ENCODE measurements at regions of chr2 and their contacts with region 1.

Region 1: GRCh38 chr2:210654091-210654490 is 97.7 kb downstream of the CPS1 start:
- DNase-seq: no peak

Region 2: GRCh38 chr2:209340522-209340921 is 1313.6 kb before region 1 on chr2:
- intact Hi-C with region 1: no loop called
- DNase-seq: no peak

Region 3: GRCh38 chr2:210577263-210578071 is 76.6 kb before region 1 on chr2:
- intact Hi-C with region 1: loop called in 1 of 2 experiments (anchors 2 kb)
- DNase-seq: no peak

Measured in posterior vena cava (tissue), 2 donors.